A549 (cell line): ENCODE measurements at regions of chr1 and their contacts with region 1.

Region 1: GRCh38 chr1:53945433-53946251 is at the start of gene IFT25:
- DNase-seq: peak; percentile 49 to 94
- ATAC-seq: peak; percentile 77 to 91
- H3K4me3 ChIP-seq: peak within 1 kb of the TSS; percentile 72
- H3K27ac ChIP-seq: peak within 1 kb of the TSS; percentile 93 to 96
- H3K4me1 ChIP-seq: peaks cover 9% of the 10 kb centered on the region; the same call in 2 of the 3 replicates
- CTCF ChIP-seq: no peak
- EP300 ChIP-seq: no peak
- POLR2A ChIP-seq: peak; percentile 68
- RAD21 ChIP-seq: no peak
- polyA plus RNA-seq, gene IFT25: 37.0 and 49.4 TPM in 2 replicates

Region 2: GRCh38 chr1:53860967-53861411 is 84.7 kb before region 1 on chr1:
- CTCF ChIA-PET with region 1: interaction called, 39 read pairs
- POLR2A ChIA-PET with region 1: interaction called, 3 read pairs
- DNase-seq: peak; percentile 50 to 56
- ATAC-seq: peak; percentile 90 to 94
- H3K4me3 ChIP-seq: no peak overlapping the region
- H3K27ac ChIP-seq: no peak overlapping the region
- H3K4me1 ChIP-seq: no peaks in the 10 kb centered on the region
- CTCF ChIP-seq: peak; percentile 78
- EP300 ChIP-seq: no peak
- POLR2A ChIP-seq: no peak
- RAD21 ChIP-seq: peak; percentile 72 to 81

Region 3: GRCh38 chr1:53869454-53870117 is 76.1 kb before region 1 on chr1:
- CTCF ChIA-PET with region 1: interaction called, 20 read pairs
- POLR2A ChIA-PET with region 1: no interaction called
- DNase-seq: no peak
- ATAC-seq: no peak
- H3K4me3 ChIP-seq: no peak overlapping the region
- H3K27ac ChIP-seq: no peak overlapping the region
- H3K4me1 ChIP-seq: no peaks in the 10 kb centered on the region
- CTCF ChIP-seq: no peak
- EP300 ChIP-seq: no peak
- POLR2A ChIP-seq: no peak
- RAD21 ChIP-seq: no peak

Region 4: GRCh38 chr1:53878492-53879105 is 67.0 kb before region 1 on chr1:
- CTCF ChIA-PET with region 1: interaction called, 39 read pairs
- POLR2A ChIA-PET with region 1: interaction called, 5 read pairs
- DNase-seq: peak; percentile 11 to 59
- ATAC-seq: peak in 1 of 2 experiments; percentile 46; a peak in 1 of 6 replicates
- H3K4me3 ChIP-seq: no peak overlapping the region
- H3K27ac ChIP-seq: no peak overlapping the region
- H3K4me1 ChIP-seq: no peaks in the 10 kb centered on the region
- CTCF ChIP-seq: peak; percentile 72
- EP300 ChIP-seq: no peak
- POLR2A ChIP-seq: no peak
- RAD21 ChIP-seq: peak; percentile 55 to 59

Region 5: DNA sequence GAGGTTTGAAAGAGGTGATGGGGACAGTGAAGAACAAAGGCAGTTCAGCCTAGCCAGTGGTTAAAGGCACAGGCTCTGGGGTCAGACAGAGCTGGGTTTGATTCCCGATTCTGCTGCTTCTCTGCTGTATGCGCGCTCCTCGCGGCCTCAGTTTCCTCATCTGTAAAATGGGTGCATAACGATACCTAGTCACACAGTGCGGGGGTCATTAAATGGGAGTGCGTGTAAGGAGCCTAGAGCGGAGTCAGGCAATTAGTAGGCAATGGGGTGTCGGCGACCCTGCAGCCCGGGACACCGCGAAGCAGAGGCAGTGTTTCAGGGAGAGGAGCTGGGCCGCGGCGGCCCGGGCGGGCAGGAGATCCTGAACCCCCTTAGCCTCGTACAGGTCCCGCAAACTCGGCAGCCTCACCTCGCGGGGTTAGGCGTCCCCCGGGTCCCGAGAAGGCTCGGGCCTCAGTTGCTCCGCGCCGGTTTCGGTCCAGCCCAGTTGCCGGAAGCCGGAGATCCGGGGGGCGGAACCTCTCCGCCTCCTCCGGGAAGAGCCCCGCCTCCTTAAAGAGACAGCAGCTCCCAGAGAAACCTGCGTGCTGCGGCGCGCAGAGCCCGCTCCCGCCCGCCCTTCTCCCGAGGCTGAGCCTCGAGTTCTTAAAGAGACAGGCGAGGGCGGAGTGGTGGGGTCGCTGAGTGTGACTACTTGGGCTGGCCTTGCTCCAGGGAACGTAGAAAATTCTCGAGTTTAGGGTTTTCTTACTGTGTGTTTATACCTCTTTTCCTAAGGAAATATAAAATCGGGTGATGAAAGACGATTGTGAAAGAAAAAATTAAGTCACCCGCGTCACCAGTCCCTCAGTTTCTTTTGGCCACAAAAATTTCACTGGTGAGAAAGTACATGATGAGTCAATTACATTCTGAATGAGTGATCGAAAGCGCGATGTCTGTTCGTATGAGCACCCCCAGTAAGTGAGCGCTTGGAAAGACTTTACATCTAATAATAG is 56.0 kb before region 1 on chr1 and contains the start of gene YIPF1:
- CTCF ChIA-PET with region 1: interaction called, 5 read pairs
- POLR2A ChIA-PET with region 1: interaction called, 12 read pairs
- DNase-seq: peak; percentile 74 to 78
- ATAC-seq: peak; percentile 99 to 100
- H3K4me3 ChIP-seq: peak within 1 kb of the TSS; percentile 87
- H3K27ac ChIP-seq: peak within 1 kb of the TSS; percentile 81 to 92
- H3K4me1 ChIP-seq: no peaks in the 10 kb centered on the region
- CTCF ChIP-seq: no peak
- EP300 ChIP-seq: no peak
- POLR2A ChIP-seq: peak; percentile 57
- RAD21 ChIP-seq: no peak
- polyA plus RNA-seq, gene YIPF1: 30.1 and 34.6 TPM in 2 replicates

Region 6: DNA sequence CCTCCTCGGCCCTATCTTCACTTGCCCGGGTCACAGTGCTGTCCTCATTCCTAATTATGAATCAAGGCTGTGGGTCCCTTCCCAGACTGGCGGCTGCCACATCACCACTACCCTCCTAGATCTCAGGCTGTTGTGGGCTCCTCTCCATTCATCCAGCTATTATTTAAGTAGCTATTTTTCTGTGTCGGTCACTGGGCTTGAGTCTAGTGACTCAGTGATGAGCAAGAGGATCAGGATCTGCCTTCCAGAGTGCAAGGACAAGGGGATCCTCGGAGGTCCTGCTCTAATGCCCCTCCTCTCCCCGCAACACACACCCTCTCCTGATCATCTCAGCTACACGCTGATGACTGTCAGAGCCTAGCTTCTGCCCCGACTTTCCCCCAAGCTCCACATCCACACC is 173.1 kb after region 1 on chr1:
- CTCF ChIA-PET with region 1: no interaction called
- POLR2A ChIA-PET with region 1: no interaction called
- DNase-seq: peak; percentile 48 to 53
- ATAC-seq: peak; percentile 26 to 30; a peak in 4 of 6 replicates
- H3K4me3 ChIP-seq: no peak overlapping the region
- H3K27ac ChIP-seq: peak overlapping the region; percentile 32 to 67; a peak in 2 of 6 replicates
- H3K4me1 ChIP-seq: peaks cover 26% of the 10 kb centered on the region
- CTCF ChIP-seq: no peak
- EP300 ChIP-seq: no peak
- POLR2A ChIP-seq: no peak
- RAD21 ChIP-seq: no peak